Activated naive CD4-positive, alpha-beta T cell treated with anti-CD3 and anti-CD28 coated beads for 36 hours (primary cell): ENCODE measurements at regions of chr14 and their contacts with region 1.

Region 1: DNA sequence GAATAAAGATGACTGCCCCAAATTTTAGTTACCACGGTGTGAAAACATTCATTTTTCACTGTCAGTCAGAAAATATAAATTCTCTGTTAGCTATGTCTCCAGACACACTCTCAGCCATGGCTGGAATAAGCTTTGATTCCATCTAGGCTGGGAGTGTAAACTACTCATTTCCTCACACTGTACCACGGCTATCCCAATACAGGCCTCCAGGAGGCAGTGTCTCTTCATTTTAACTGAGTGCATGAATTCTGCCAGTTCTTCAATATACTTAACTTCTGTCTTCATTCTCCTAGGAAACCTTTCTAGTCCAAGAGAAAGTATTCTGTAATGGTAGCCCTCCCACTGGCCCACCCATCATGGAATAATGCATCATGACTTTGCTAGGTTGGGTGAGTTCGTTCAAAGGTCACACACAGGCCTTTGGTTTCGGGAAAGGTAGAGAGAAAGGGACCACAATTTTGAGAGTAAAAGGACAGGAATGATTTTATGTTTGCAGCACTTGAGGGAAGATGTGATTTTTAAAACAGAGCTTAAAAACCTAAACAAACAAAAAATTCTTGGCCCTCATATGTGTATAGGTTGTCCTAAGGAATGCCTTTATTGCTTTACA is 381.1 kb downstream of the SEC23A start:
- DNase-seq: peak; percentile 64
- H3K4me3 Mint-ChIP-seq: no peak overlapping the region
- H3K27ac Mint-ChIP-seq: no peak overlapping the region
- H3K4me1 Mint-ChIP-seq: no peaks in the 10 kb centered on the region
- H3K27me3 Mint-ChIP-seq: peaks cover 2% of the 10 kb centered on the region

Region 2: GRCh38 chr14:38867561-38868150 is 145.7 kb after region 1 on chr14:
- CTCF ChIA-PET with region 1: interaction called, 12 read pairs
- intact Hi-C with region 1: loop called (anchors 1 kb)
- DNase-seq: peak; percentile 80
- H3K4me3 Mint-ChIP-seq: no peak overlapping the region
- H3K27ac Mint-ChIP-seq: no peak overlapping the region
- H3K4me1 Mint-ChIP-seq: no peaks in the 10 kb centered on the region
- H3K27me3 Mint-ChIP-seq: peaks cover 5% of the 10 kb centered on the region